Naive thymus-derived CD4-positive, alpha-beta T cell (primary cell): ENCODE measurements at regions of chr14 and their contacts with region 1.

Region 1: DNA sequence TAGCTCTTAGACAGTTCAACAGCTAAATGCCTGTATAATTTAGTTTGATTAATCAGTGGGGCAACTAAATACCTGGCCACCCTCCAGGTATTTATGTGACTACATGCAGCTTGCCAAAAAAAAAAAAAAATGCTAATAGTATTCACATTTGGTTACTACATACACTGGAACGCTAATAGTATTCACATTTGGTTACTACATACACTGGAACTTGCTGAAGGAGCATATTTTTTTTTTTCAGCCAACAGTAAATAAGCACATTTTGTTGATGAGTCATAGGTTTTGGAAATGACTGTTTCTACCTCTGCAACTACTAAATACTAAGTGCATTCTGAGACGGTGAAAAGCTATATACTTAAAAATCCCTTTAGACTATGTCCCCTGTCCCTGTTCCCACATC is 1172.3 kb downstream of the LRFN5 start:
- DNase-seq: no peak
- ATAC-seq: no peak
- H3K4me3 ChIP-seq: no peak overlapping the region
- H3K4me3 Mint-ChIP-seq: no peak overlapping the region
- H3K27ac ChIP-seq: no peak overlapping the region
- H3K27ac Mint-ChIP-seq: no peak overlapping the region
- H3K4me1 ChIP-seq: no peaks in the 10 kb centered on the region
- H3K4me1 Mint-ChIP-seq: no peaks in the 10 kb centered on the region
- H3K27me3 ChIP-seq: no peaks in the 10 kb centered on the region
- H3K27me3 Mint-ChIP-seq: no peaks in the 10 kb centered on the region

Region 2: GRCh38 chr14:42806909-42807315 is 27.9 kb after region 1 on chr14:
- CTCF ChIA-PET with region 1: no interaction called
- POLR2A ChIA-PET with region 1: no interaction called
- intact Hi-C with region 1: loop called in 1 of 2 experiments (anchors 1 kb)
- DNase-seq: no peak
- ATAC-seq: no peak
- H3K4me3 ChIP-seq: no peak overlapping the region
- H3K4me3 Mint-ChIP-seq: no peak overlapping the region
- H3K27ac ChIP-seq: no peak overlapping the region
- H3K27ac Mint-ChIP-seq: no peak overlapping the region
- H3K4me1 ChIP-seq: no peaks in the 10 kb centered on the region
- H3K4me1 Mint-ChIP-seq: no peaks in the 10 kb centered on the region
- H3K27me3 ChIP-seq: no peaks in the 10 kb centered on the region
- H3K27me3 Mint-ChIP-seq: no peaks in the 10 kb centered on the region

Region 3: GRCh38 chr14:42855085-42855484 is 76.1 kb after region 1 on chr14:
- CTCF ChIA-PET with region 1: no interaction called
- POLR2A ChIA-PET with region 1: no interaction called
- intact Hi-C with region 1: no loop called
- DNase-seq: no peak
- ATAC-seq: no peak
- H3K4me3 ChIP-seq: no peak overlapping the region
- H3K4me3 Mint-ChIP-seq: no peak overlapping the region
- H3K27ac ChIP-seq: no peak overlapping the region
- H3K27ac Mint-ChIP-seq: no peak overlapping the region
- H3K4me1 ChIP-seq: no peaks in the 10 kb centered on the region
- H3K4me1 Mint-ChIP-seq: no peaks in the 10 kb centered on the region
- H3K27me3 ChIP-seq: no peaks in the 10 kb centered on the region
- H3K27me3 Mint-ChIP-seq: no peaks in the 10 kb centered on the region